Activated CD8-positive, alpha-beta T cell treated with anti-CD3 and anti-CD28 coated beads for 36 hours (primary cell): ENCODE measurements at regions of chr3 and their contacts with region 1.

Region 1: DNA sequence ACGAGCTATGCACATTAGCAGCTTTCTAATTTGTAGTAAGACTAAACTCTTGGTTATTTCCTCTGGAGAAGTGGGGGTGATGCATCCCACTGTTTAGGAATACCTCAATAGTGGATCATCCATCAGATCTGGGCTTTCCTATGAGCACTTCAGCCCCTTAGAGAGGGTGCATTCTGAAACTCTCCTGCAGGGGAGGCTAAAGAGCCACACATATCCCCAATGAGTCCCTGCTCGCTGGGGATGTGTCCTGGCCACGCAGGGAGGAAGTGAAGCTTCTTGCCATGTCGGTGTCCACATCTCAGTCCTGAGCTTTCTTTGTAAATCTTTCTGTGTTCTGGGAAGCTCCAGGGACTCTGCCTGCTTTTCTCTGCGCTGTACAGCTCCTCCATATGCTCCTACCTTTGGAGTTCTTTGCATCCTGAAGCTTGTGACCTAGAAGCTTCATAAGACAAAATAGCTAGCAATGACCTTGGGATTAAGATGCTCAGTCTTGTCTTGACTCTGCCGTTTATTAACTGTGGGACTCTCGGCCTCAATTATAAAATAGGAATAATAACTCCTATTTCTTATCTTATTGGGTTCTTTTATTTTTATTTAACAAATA is 28.3 kb upstream of the MASP1 start:
- DNase-seq: peak; percentile 83
- ATAC-seq: peak; percentile 94
- H3K4me3 Mint-ChIP-seq: no peak overlapping the region
- H3K27ac Mint-ChIP-seq: no peak overlapping the region
- H3K4me1 Mint-ChIP-seq: peaks cover 6% of the 10 kb centered on the region
- H3K27me3 Mint-ChIP-seq: peaks cover 30% of the 10 kb centered on the region
- CTCF ChIP-seq: peak; percentile 81

Region 2: GRCh38 chr3:187277129-187277462 is 42.7 kb before region 1 on chr3:
- CTCF ChIA-PET with region 1: no interaction called
- POLR2A ChIA-PET with region 1: no interaction called
- intact Hi-C with region 1: no loop called
- DNase-seq: no peak
- ATAC-seq: no peak
- H3K4me3 Mint-ChIP-seq: no peak overlapping the region
- H3K27ac Mint-ChIP-seq: no peak overlapping the region
- H3K4me1 Mint-ChIP-seq: no peaks in the 10 kb centered on the region
- H3K27me3 Mint-ChIP-seq: peaks cover 10% of the 10 kb centered on the region
- CTCF ChIP-seq: no peak

Region 3: DNA sequence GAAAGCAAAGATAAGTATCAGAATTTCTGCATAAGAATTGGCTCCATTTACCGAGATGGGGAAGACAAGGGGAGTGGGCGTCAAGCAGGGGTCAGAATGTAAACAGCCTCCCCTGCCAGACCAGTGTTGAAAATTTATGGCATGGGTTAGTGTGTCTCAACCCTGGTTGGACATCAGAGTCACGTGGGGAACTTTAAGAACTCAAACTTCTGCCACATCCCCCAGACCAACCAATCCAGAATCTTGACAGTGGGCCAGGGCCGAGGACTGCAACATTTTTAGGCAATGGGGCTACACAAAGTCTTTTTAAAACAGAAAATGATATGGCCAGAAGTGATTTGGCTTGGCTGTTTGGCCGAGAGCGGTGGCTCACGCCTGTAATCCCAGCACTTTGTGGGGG is 13.9 kb before region 1 on chr3:
- CTCF ChIA-PET with region 1: interaction called, 47 read pairs
- POLR2A ChIA-PET with region 1: no interaction called
- intact Hi-C with region 1: no loop called
- DNase-seq: no peak
- ATAC-seq: no peak
- H3K4me3 Mint-ChIP-seq: no peak overlapping the region
- H3K27ac Mint-ChIP-seq: no peak overlapping the region
- H3K4me1 Mint-ChIP-seq: no peaks in the 10 kb centered on the region
- H3K27me3 Mint-ChIP-seq: peaks cover 14% of the 10 kb centered on the region
- CTCF ChIP-seq: no peak

Region 4: GRCh38 chr3:187448674-187449073 is 128.9 kb after region 1 on chr3:
- CTCF ChIA-PET with region 1: interaction called, 18 read pairs
- POLR2A ChIA-PET with region 1: no interaction called
- intact Hi-C with region 1: no loop called
- DNase-seq: no peak
- ATAC-seq: no peak
- H3K4me3 Mint-ChIP-seq: no peak overlapping the region
- H3K27ac Mint-ChIP-seq: no peak overlapping the region
- H3K4me1 Mint-ChIP-seq: no peaks in the 10 kb centered on the region
- H3K27me3 Mint-ChIP-seq: peaks cover 4% of the 10 kb centered on the region
- CTCF ChIP-seq: no peak

Region 5: GRCh38 chr3:187616307-187616972 is 296.6 kb after region 1 on chr3:
- CTCF ChIA-PET with region 1: interaction called, 62 read pairs
- POLR2A ChIA-PET with region 1: no interaction called
- intact Hi-C with region 1: loop called (anchors 2 kb)
- DNase-seq: peak; percentile 77
- ATAC-seq: peak; percentile 70
- H3K4me3 Mint-ChIP-seq: no peak overlapping the region
- H3K27ac Mint-ChIP-seq: no peak overlapping the region
- H3K4me1 Mint-ChIP-seq: peaks cover 4% of the 10 kb centered on the region
- H3K27me3 Mint-ChIP-seq: peaks cover 12% of the 10 kb centered on the region
- CTCF ChIP-seq: peak; percentile 79

Region 6: GRCh38 chr3:187679638-187680396 is 360.0 kb after region 1 on chr3:
- CTCF ChIA-PET with region 1: interaction called, 372 read pairs
- POLR2A ChIA-PET with region 1: no interaction called
- intact Hi-C with region 1: loop called (anchors 1 kb)
- DNase-seq: peak; percentile 78
- ATAC-seq: peak; percentile 70
- H3K4me3 Mint-ChIP-seq: no peak overlapping the region
- H3K27ac Mint-ChIP-seq: no peak overlapping the region
- H3K4me1 Mint-ChIP-seq: peaks cover 7% of the 10 kb centered on the region
- H3K27me3 Mint-ChIP-seq: peaks cover 30% of the 10 kb centered on the region
- CTCF ChIP-seq: peak; percentile 88

Region 7: DNA sequence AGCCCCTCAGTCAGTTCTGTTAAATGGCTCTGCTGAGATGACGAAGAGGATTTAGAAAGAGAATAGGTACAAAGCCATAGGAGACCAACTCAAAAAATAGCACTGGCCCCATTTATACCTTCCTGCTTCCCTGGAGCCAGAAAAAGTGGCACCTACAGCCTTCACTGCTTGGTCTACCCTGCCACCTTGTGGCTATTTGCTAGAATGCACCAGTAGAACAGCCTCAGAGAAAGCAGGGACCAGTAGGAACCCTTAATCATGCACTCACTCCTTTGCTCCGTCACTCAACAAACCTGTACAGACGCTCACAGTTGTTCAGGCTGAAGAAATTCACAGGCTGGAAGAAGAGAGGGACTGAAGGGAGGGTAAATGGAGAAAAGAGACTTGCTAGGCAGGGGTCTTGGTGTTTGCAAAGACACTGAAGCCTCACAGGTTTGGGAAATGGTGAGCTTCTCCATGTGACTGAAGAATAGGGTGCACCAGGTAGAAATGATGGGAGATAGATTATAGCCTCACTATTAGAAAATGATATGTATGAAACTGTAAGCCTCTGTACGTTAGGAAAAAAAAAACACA is 394.7 kb after region 1 on chr3:
- CTCF ChIA-PET with region 1: interaction called, 118 read pairs
- POLR2A ChIA-PET with region 1: no interaction called
- intact Hi-C with region 1: loop called (anchors 1 kb)
- DNase-seq: peak; percentile 85
- ATAC-seq: peak; percentile 95
- H3K4me3 Mint-ChIP-seq: no peak overlapping the region
- H3K27ac Mint-ChIP-seq: no peak overlapping the region
- H3K4me1 Mint-ChIP-seq: peaks cover 9% of the 10 kb centered on the region
- H3K27me3 Mint-ChIP-seq: no peaks in the 10 kb centered on the region
- CTCF ChIP-seq: peak; percentile 90